ENCODE measurements at regions of chr6 and their contacts with region 1.

Region 1: GRCh38 chr6:99467509-99468106 is 42.5 kb upstream of the PNISR start:
- DNase-seq: no peak
- H3K4me3 ChIP-seq: no peak overlapping the region
- H3K27ac ChIP-seq: no peak overlapping the region
- H3K4me1 ChIP-seq: no peaks in the 10 kb centered on the region
- H3K27me3 ChIP-seq: no peaks in the 10 kb centered on the region
- CTCF ChIP-seq: peak in 2 of 3 donors; percentile 28 to 34
- EP300 ChIP-seq: no peak
- POLR2A ChIP-seq: no peak

Region 2: GRCh38 chr6:99746261-99746895 is 278.8 kb after region 1 on chr6:
- intact Hi-C with region 1: loop called in 3 of 4 experiments (anchors 10 kb)
- DNase-seq: peak in 4 of 5 donors; percentile 22 to 52 (median 23)
- H3K4me3 ChIP-seq: no peak overlapping the region
- H3K27ac ChIP-seq: no peak overlapping the region
- H3K4me1 ChIP-seq: no peaks in the 10 kb centered on the region
- H3K27me3 ChIP-seq: no peaks in the 10 kb centered on the region
- CTCF ChIP-seq: peak; percentile 47 to 69 (median 56)
- EP300 ChIP-seq: no peak
- POLR2A ChIP-seq: no peak

Region 3: DNA sequence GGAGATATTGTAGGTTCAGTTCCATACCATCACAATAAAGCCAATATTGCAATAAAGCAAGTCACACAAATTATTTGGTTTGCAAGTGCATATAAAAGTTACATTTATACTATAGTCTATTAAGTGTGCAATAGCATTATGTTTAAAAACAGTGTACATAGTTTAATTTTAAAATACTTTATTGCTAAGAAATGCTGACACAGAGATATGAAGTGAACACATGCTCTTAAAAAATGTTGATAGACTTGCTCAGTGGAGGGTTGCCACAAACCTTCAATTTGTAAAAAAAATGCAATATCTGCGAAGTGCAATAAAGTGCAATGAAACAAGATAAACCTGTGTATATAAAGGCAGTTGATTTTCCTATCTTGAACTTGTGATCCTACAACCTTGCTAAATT is 300.6 kb after region 1 on chr6:
- intact Hi-C with region 1: no loop called
- DNase-seq: no peak
- H3K4me3 ChIP-seq: no peak overlapping the region
- H3K27ac ChIP-seq: no peak overlapping the region
- H3K4me1 ChIP-seq: no peaks in the 10 kb centered on the region
- H3K27me3 ChIP-seq: no peaks in the 10 kb centered on the region
- CTCF ChIP-seq: no peak
- EP300 ChIP-seq: no peak
- POLR2A ChIP-seq: no peak

Measured in ovary (tissue), 10 donors.